ENCODE measurements at regions of chr18 and their contacts with region 1.

Region 1: GRCh38 chr18:48445540-48445939 is 36.4 kb upstream of the ZBTB7C start:
- DNase-seq: no peak
- H3K4me3 ChIP-seq: no peak overlapping the region
- H3K27ac ChIP-seq: no peak overlapping the region
- H3K4me1 ChIP-seq: peaks cover 32% of the 10 kb centered on the region
- H3K27me3 ChIP-seq: no peaks in the 10 kb centered on the region
- CTCF ChIP-seq: peak; percentile 45 to 66 (median 58)
- POLR2A ChIP-seq: no peak

Region 2: DNA sequence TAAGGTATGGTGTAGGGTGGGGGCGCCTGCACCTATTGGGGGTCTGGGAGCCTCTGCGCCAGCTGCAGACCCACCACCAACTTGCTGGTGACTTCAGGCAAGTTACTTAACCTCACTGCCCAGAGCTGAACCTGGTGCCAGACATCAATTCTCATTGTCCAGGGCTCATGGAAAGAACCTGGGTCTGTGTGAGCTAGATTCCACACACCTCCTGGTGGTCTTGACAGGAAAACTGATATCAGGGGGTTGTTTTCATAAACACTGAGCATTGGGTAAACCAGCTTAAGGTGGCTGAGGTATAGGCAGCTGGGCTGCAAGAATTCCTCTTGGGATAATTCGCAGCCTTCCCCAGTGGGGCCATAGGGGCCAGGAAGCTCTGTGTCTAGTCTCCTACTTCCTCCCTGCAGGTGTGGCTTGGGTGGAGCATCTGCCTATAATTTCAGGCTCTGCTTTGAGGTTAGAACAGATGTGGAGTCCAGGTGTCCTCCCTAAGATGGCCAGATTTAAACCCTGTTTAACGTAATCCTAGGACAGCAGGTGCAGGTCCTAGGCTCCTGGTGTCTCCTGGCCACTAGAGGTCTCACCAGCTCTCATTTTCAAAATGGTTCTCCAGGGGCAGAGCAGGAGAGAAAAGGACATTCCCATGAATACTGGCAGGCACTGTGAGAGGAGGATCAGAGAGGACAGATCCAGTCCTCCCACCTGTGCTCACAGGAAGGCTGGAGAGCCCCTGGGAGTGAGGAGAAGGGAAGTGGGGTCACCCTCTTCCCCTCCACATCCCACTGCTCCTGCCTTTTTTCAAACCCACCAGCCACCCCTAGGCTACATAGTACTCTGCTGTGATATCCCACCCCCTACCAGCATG is 414.7 kb before region 1 on chr18:
- intact Hi-C with region 1: loop called (anchors 5 kb)
- DNase-seq: no peak
- H3K4me3 ChIP-seq: no peak overlapping the region
- H3K27ac ChIP-seq: no peak overlapping the region
- H3K4me1 ChIP-seq: peaks cover 40% of the 10 kb centered on the region
- H3K27me3 ChIP-seq: no peaks in the 10 kb centered on the region
- CTCF ChIP-seq: peak; percentile 22 to 74 (median 66)
- POLR2A ChIP-seq: no peak

Region 3: GRCh38 chr18:48410095-48410920 is 35.2 kb before region 1 on chr18:
- intact Hi-C with region 1: loop called (anchors 1 kb)
- DNase-seq: no peak
- H3K4me3 ChIP-seq: peak overlapping the region; percentile 79 to 81
- H3K27ac ChIP-seq: peak overlapping the region; percentile 77
- H3K4me1 ChIP-seq: peaks cover 8% of the 10 kb centered on the region
- H3K27me3 ChIP-seq: no peaks in the 10 kb centered on the region
- CTCF ChIP-seq: no peak
- POLR2A ChIP-seq: peak in 1 of 2 donors; percentile 35

Measured in vagina (tissue), 2 donors.